Mammary epithelial cell (primary cell): ENCODE measurements at regions of chr11 and their contacts with region 1.

Region 1: DNA sequence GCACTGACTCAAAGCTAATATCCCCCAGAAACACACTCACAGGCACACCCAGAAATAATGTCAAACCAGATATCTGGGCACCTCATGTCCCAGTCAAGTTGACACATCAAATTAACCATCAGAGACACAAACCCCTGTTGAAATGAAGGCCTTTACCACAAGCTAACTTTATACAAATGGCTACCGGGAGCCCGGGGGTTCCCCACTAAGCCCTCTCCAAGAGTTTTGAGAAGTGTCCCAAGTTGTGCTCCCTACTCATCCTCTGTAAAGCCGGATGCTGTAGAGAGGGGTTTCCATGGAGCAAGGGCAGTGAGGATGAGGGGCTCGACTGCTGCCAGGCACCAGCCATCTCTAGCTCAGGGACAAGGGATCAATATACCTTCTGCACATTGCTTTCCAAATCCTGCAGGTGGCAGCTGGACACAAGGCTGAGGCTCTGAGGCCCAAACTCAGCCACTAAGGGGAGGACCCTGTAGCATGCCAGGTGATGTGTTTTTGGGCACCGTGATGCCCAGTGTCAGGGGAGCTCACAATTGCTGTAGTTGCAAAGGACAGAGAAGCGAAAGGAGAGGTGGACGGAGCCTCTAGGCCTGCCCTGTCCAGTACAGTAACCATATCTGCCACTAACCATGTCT is 145.7 kb downstream of the TTC17 start:
- DNase-seq: peak; percentile 18
- H3K4me3 ChIP-seq: no peak overlapping the region
- H3K27ac ChIP-seq: no peak overlapping the region
- H3K4me1 ChIP-seq: peaks cover 16% of the 10 kb centered on the region
- H3K27me3 ChIP-seq: no peaks in the 10 kb centered on the region
- CTCF ChIP-seq: peak; percentile 47 to 79

Region 2: DNA sequence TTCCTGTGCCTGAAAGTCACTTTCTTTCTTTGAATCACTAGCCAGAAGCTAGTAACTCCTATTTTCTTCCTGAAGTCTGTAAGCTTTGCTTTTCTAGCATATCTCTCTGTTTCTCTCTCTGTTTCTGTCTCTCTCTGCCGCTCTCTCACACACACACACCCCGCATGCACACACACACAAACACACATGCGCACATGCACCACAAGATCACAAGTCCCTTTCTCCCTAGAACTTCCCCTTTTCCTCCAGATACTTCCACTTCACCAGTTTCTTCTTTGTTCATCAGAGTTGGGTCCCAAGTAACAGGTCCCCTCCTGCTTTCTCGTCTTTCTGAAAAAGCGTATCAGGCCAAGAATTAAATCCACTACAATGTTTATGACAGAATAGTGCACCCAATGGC is 27.6 kb after region 1 on chr11:
- CTCF ChIA-PET with region 1: no interaction called
- dilution Hi-C with region 1: no loop called
- in situ Hi-C with region 1: no loop called
- intact Hi-C with region 1: no loop called
- DNase-seq: no peak
- H3K4me3 ChIP-seq: no peak overlapping the region
- H3K27ac ChIP-seq: no peak overlapping the region
- H3K4me1 ChIP-seq: no peaks in the 10 kb centered on the region
- H3K27me3 ChIP-seq: peaks cover 9% of the 10 kb centered on the region
- CTCF ChIP-seq: no peak

Region 3: DNA sequence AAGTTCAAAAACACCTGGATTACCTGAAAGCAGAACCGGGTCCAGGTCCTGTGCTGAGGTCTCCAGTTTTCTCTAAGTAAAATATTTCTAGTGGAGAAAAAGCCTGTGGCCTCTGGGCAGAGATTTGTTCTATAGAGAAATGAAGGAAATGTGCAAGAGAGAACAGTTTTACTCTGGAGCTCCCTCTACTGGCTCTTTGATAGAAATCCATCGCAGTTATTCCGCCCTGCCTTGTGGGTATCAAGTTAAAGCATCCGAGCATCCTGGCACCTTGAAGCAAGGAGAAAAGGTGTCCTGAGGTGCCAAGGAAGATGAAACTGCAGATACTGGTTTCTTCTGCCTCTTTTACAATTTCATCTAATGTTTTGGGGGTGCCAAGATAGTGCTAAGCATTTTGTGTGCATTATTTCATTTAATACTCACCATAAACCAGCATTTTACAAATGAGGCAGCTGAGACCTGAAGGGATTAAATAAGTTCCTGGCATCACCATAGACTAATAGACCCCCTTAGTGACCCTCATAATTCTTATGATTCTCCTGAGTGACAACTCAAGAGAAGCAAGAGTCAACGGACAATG is 63.1 kb after region 1 on chr11:
- CTCF ChIA-PET with region 1: interaction called, 18 read pairs
- dilution Hi-C with region 1: no loop called
- in situ Hi-C with region 1: loop called (anchors 5 to 10 kb)
- intact Hi-C with region 1: loop called (anchors 1 kb)
- DNase-seq: no peak
- H3K4me3 ChIP-seq: no peak overlapping the region
- H3K27ac ChIP-seq: no peak overlapping the region
- H3K4me1 ChIP-seq: no peaks in the 10 kb centered on the region
- H3K27me3 ChIP-seq: peaks cover 4% of the 10 kb centered on the region
- CTCF ChIP-seq: peak; percentile 65 to 78

Region 4: GRCh38 chr11:43579171-43579918 is 74.9 kb after region 1 on chr11:
- CTCF ChIA-PET with region 1: interaction called, 5 read pairs
- dilution Hi-C with region 1: no loop called
- in situ Hi-C with region 1: loop called (anchors 5 to 10 kb)
- intact Hi-C with region 1: no loop called
- DNase-seq: peak; percentile 64
- H3K4me3 ChIP-seq: peak overlapping the region; percentile 42 to 49 (median 46)
- H3K27ac ChIP-seq: no peak overlapping the region
- H3K4me1 ChIP-seq: peaks cover 23% of the 10 kb centered on the region
- H3K27me3 ChIP-seq: peaks cover 76% of the 10 kb centered on the region
- CTCF ChIP-seq: peak; percentile 13 to 59

Region 5: GRCh38 chr11:43789700-43790443 is 285.4 kb after region 1 on chr11:
- CTCF ChIA-PET with region 1: no interaction called
- dilution Hi-C with region 1: no loop called
- in situ Hi-C with region 1: no loop called
- intact Hi-C with region 1: no loop called
- DNase-seq: peak; percentile 74
- H3K4me3 ChIP-seq: no peak overlapping the region
- H3K27ac ChIP-seq: peak overlapping the region; percentile 86
- H3K4me1 ChIP-seq: peaks cover 19% of the 10 kb centered on the region
- H3K27me3 ChIP-seq: no peaks in the 10 kb centered on the region
- CTCF ChIP-seq: no peak

Region 6: DNA sequence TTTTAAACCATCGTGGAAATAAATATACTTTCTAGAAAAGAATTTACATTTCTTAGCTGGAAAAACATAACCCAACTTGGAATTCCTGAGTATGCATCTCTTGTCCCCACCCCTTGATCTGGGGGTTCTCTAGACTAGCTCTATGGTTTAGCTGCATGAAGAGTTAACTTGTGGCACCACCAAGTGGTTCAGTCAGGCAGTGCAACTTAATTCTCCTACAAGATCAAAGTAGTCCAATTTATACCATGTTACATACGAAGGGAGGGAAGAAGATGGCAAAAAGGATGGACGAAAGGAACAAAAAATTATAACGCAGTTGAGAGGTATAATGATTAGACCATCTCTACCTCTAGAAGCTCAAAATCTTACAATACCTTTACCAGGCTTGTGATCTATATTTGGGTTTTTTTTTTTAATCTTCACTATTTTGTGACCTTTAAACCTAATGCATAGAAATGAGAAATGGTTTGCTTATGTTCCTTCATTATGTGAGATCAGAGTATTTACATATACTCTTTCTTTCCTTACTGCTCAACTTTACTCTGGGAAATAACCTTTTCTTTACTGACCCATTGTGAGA is 347.7 kb after region 1 on chr11:
- CTCF ChIA-PET with region 1: no interaction called
- dilution Hi-C with region 1: no loop called
- in situ Hi-C with region 1: loop called in 1 of 2 experiments (anchors 5 kb)
- intact Hi-C with region 1: loop called (anchors 1 kb)
- DNase-seq: peak; percentile 59
- H3K4me3 ChIP-seq: no peak overlapping the region
- H3K27ac ChIP-seq: no peak overlapping the region
- H3K4me1 ChIP-seq: peaks cover 5% of the 10 kb centered on the region
- H3K27me3 ChIP-seq: no peaks in the 10 kb centered on the region
- CTCF ChIP-seq: peak; percentile 84 to 87

Region 7: GRCh38 chr11:44036811-44037657 is 532.6 kb after region 1 on chr11:
- CTCF ChIA-PET with region 1: no interaction called
- dilution Hi-C with region 1: no loop called
- in situ Hi-C with region 1: no loop called
- intact Hi-C with region 1: loop called (anchors 5 kb)
- DNase-seq: peak; percentile 51
- H3K4me3 ChIP-seq: no peak overlapping the region
- H3K27ac ChIP-seq: no peak overlapping the region
- H3K4me1 ChIP-seq: no peaks in the 10 kb centered on the region
- H3K27me3 ChIP-seq: no peaks in the 10 kb centered on the region
- CTCF ChIP-seq: peak; percentile 73 to 87